WTC11 (cell line): ENCODE measurements at regions of chr7 and their contacts with region 1.

Region 1: DNA sequence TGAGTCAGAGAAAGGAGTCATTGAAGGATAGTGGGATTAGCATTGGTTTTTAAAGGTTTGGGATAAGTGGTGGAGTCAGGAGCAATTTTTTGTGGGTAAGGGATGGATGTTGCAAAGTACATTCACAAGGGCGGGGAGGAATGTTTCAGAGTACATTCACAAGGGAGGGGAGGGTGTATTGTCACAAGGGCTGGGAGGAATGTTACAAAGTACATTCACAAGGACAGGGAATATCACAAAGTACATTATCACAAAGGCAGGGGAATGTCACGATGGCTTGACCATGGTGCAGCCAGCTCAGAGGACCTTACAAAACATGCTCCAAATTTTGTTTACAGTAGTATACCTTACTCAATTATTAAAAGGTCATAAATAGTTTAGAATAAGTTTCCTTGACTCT is 30.3 kb downstream of the C1GALT1 start:
- DNase-seq: no peak
- ATAC-seq: no peak
- H3K4me3 Mint-ChIP-seq: peak overlapping the region; percentile 24; the same call in 1 of the 2 replicates
- H3K27ac Mint-ChIP-seq: peak overlapping the region; percentile 99
- H3K4me1 Mint-ChIP-seq: peaks cover 86% of the 10 kb centered on the region
- H3K27me3 Mint-ChIP-seq: no peaks in the 10 kb centered on the region
- CTCF ChIP-seq: no peak

Region 2: GRCh38 chr7:7182156-7183060 is 30.2 kb before region 1 on chr7 and contains the start of gene C1GALT1:
- CTCF ChIA-PET with region 1: interaction called, 17 read pairs
- POLR2A ChIA-PET with region 1: interaction called, 21 read pairs
- DNase-seq: peak; percentile 98
- ATAC-seq: peak; percentile 90
- H3K4me3 Mint-ChIP-seq: peak within 1 kb of the TSS; percentile 79
- H3K27ac Mint-ChIP-seq: peak within 1 kb of the TSS; percentile 100
- H3K4me1 Mint-ChIP-seq: peaks cover 16% of the 10 kb centered on the region
- H3K27me3 Mint-ChIP-seq: no peaks in the 10 kb centered on the region
- CTCF ChIP-seq: no peak
- total RNA-seq, gene C1GALT1: 106 to 114 TPM (median 107 TPM) in 3 replicates

Region 3: GRCh38 chr7:7223250-7223649 is 10.6 kb after region 1 on chr7:
- CTCF ChIA-PET with region 1: no interaction called
- POLR2A ChIA-PET with region 1: no interaction called
- DNase-seq: no peak
- ATAC-seq: no peak
- H3K4me3 Mint-ChIP-seq: no peak overlapping the region
- H3K27ac Mint-ChIP-seq: no peak overlapping the region
- H3K4me1 Mint-ChIP-seq: peaks cover 47% of the 10 kb centered on the region
- H3K27me3 Mint-ChIP-seq: no peaks in the 10 kb centered on the region
- CTCF ChIP-seq: no peak

Region 4: GRCh38 chr7:7292085-7292484 is 79.5 kb after region 1 on chr7:
- CTCF ChIA-PET with region 1: no interaction called
- POLR2A ChIA-PET with region 1: no interaction called
- DNase-seq: no peak
- ATAC-seq: no peak
- H3K4me3 Mint-ChIP-seq: no peak overlapping the region
- H3K27ac Mint-ChIP-seq: no peak overlapping the region
- H3K4me1 Mint-ChIP-seq: peaks cover 31% of the 10 kb centered on the region
- H3K27me3 Mint-ChIP-seq: no peaks in the 10 kb centered on the region
- CTCF ChIP-seq: no peak

Region 5: GRCh38 chr7:7304705-7305450 is 92.3 kb after region 1 on chr7:
- CTCF ChIA-PET with region 1: no interaction called
- POLR2A ChIA-PET with region 1: no interaction called
- DNase-seq: no peak
- ATAC-seq: no peak
- H3K4me3 Mint-ChIP-seq: no peak overlapping the region
- H3K27ac Mint-ChIP-seq: no peak overlapping the region
- H3K4me1 Mint-ChIP-seq: peaks cover 21% of the 10 kb centered on the region
- H3K27me3 Mint-ChIP-seq: peaks cover 8% of the 10 kb centered on the region
- CTCF ChIP-seq: no peak